ENCODE measurements at regions of chr17 and their contacts with region 1.

Region 1: GRCh38 chr17:16215273-16215964 is at the start of gene NCOR1:
- DNase-seq: peak; percentile 79 to 95 (median 87)
- ATAC-seq: peak; percentile 87
- H3K4me3 ChIP-seq: peak within 1 kb of the TSS; percentile 73
- H3K4me3 Mint-ChIP-seq: peak within 1 kb of the TSS; percentile 100
- H3K27ac ChIP-seq: peak within 1 kb of the TSS; percentile 72 to 79
- H3K27ac Mint-ChIP-seq: peak within 1 kb of the TSS; percentile 99
- H3K4me1 ChIP-seq: peaks cover 36% of the 10 kb centered on the region
- H3K4me1 Mint-ChIP-seq: peaks cover 58% of the 10 kb centered on the region
- H3K27me3 ChIP-seq: no peaks in the 10 kb centered on the region
- H3K27me3 Mint-ChIP-seq: no peaks in the 10 kb centered on the region
- CTCF ChIP-seq: no peak
- total RNA-seq, gene NCOR1: 118 TPM

Region 2: GRCh38 chr17:16013943-16014407 is 201.4 kb before region 1 on chr17:
- CTCF ChIA-PET with region 1: no interaction called
- POLR2A ChIA-PET with region 1: no interaction called
- intact Hi-C with region 1: no loop called
- DNase-seq: no peak
- ATAC-seq: no peak
- H3K4me3 ChIP-seq: no peak overlapping the region
- H3K4me3 Mint-ChIP-seq: no peak overlapping the region
- H3K27ac ChIP-seq: no peak overlapping the region
- H3K27ac Mint-ChIP-seq: no peak overlapping the region
- H3K4me1 ChIP-seq: peaks cover 2% of the 10 kb centered on the region
- H3K4me1 Mint-ChIP-seq: peaks cover 16% of the 10 kb centered on the region
- H3K27me3 ChIP-seq: no peaks in the 10 kb centered on the region
- H3K27me3 Mint-ChIP-seq: no peaks in the 10 kb centered on the region
- CTCF ChIP-seq: no peak

Region 3: GRCh38 chr17:16353317-16354174 is 138.1 kb after region 1 on chr17 and contains the start of gene CENPV:
- CTCF ChIA-PET with region 1: interaction called, 3 read pairs
- POLR2A ChIA-PET with region 1: interaction called, 6 read pairs
- intact Hi-C with region 1: loop called in 1 of 2 experiments (anchors 5 kb)
- DNase-seq: peak; percentile 37 to 88 (median 60)
- ATAC-seq: peak; percentile 85
- H3K4me3 ChIP-seq: peak within 1 kb of the TSS; percentile 73
- H3K4me3 Mint-ChIP-seq: peak within 1 kb of the TSS; percentile 97
- H3K27ac ChIP-seq: peak within 1 kb of the TSS in 1 of 2 donors; percentile 30
- H3K27ac Mint-ChIP-seq: peak within 1 kb of the TSS; percentile 72
- H3K4me1 ChIP-seq: peaks cover 19% of the 10 kb centered on the region
- H3K4me1 Mint-ChIP-seq: peaks cover 17% of the 10 kb centered on the region
- H3K27me3 ChIP-seq: no peaks in the 10 kb centered on the region
- H3K27me3 Mint-ChIP-seq: no peaks in the 10 kb centered on the region
- CTCF ChIP-seq: no peak
- total RNA-seq, gene CENPV: 18.5 to 19.4 TPM

Measured in CD4-positive, alpha-beta T cell (primary cell).